ENCODE measurements at regions of chr2 and their contacts with region 1.

Region 1: GRCh38 chr2:235779444-235779896 is 285.6 kb downstream of the AGAP1 start:
- DNase-seq: peak; percentile 67 to 89 (median 77)
- H3K4me3 ChIP-seq: no peak overlapping the region
- H3K27ac ChIP-seq: no peak overlapping the region
- H3K4me1 ChIP-seq: no peaks in the 10 kb centered on the region
- H3K27me3 ChIP-seq: no peaks in the 10 kb centered on the region
- CTCF ChIP-seq: peak; percentile 61 to 81 (median 67)
- POLR2A ChIP-seq: no peak

Region 2: DNA sequence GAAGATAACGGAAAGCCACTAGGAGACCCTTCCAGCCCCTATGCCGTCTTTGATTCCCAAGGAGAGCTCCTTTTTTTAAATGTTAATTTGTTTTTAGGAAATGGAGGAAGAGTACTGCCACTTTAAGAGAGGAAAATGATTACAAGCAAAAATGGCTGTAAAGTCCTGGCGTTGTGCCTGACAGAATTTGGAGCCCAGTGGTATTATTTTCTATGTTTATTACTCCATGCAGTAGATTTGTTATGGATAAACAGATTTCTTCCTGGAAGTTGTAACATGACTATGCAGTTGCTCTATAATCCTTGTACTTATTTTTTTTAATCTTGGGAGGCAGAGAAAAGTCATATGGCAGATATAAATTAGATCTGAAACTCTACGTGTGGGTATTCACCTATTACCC is 247.4 kb after region 1 on chr2:
- intact Hi-C with region 1: no loop called
- DNase-seq: no peak
- H3K4me3 ChIP-seq: no peak overlapping the region
- H3K27ac ChIP-seq: no peak overlapping the region
- H3K4me1 ChIP-seq: no peaks in the 10 kb centered on the region
- H3K27me3 ChIP-seq: no peaks in the 10 kb centered on the region
- CTCF ChIP-seq: no peak
- POLR2A ChIP-seq: no peak

Region 3: DNA sequence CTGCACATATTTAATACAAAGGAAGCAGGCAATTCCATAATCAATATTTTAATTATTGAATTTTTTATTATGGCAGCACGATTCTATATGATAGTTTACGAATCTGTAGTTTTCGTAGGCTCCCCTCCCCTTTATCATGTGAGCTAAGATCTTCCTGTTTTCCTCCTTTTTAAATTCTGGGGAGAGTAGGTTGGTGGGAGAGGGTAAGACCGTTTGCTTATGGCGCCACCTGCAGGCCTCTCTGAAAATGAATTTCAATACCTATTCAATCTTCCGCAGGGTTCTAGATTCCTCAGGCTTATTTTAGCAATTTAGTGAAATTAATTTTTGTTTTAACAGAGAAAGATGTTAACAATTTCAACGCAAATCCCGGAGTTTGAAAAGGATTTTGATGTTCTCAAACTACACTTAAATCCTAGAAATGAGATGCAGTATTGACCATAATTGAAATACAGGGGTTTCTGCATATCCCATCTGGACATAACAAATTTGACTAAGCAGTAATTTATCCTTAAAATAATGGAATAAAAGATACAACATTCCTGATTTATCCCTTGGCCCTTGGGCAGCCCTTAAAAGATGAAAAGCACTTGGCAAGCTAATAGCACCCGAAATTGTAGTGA is 401.5 kb after region 1 on chr2:
- intact Hi-C with region 1: loop called (anchors 5 kb)
- DNase-seq: peak; percentile 27 to 71 (median 52)
- H3K4me3 ChIP-seq: no peak overlapping the region
- H3K27ac ChIP-seq: no peak overlapping the region
- H3K4me1 ChIP-seq: peaks cover 5 to 17% of the 10 kb centered on the region in 2 donors
- H3K27me3 ChIP-seq: peaks cover 58% of the 10 kb centered on the region
- CTCF ChIP-seq: peak; percentile 45 to 70 (median 60)
- POLR2A ChIP-seq: no peak